ENCODE measurements at regions of chr12 and their contacts with region 1.

Region 1: GRCh38 chr12:12442548-12443071 is 85.7 kb downstream of the BORCS5 start:
- DNase-seq: no peak
- H3K4me3 Mint-ChIP-seq: peak overlapping the region; percentile 21
- H3K27ac Mint-ChIP-seq: peak overlapping the region; percentile 91
- H3K4me1 Mint-ChIP-seq: peaks cover 64% of the 10 kb centered on the region
- H3K27me3 Mint-ChIP-seq: no peaks in the 10 kb centered on the region

Region 2: DNA sequence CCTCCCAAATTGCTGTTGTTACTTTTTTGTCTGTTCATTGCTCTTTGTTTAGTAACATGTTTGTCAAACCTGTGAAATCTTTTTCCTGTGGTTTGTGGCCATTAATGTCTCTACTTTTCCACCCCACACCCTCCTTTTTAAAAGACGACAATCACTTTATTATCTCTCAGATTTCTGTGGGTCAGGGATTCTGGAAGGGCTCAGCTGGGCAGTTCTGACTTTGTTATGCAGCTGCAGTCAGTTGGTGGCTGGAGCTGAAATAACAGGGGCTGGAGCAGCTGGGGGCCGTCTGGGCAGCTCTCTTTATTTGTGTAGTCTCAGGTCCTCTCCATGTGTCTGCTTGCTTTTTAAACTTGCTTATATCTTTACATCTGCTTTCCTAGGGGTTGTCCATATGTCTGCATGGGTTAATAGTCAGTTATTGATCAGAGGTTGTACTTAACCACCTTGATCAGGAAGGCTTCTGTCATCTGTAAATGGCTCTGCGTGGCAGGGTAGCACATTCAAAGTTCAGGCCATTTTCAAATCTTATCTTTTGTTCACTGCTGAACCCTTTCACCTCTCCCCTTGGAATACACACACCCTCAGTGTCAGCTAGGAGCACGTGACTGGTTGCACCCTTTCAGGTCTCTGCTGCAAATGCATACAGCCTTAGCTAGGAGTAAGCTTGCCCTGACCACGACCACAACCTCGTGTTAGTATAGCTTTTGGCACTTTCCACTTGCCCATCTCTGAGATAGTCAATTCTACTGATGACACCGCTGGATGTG is 57.9 kb before region 1 on chr12:
- intact Hi-C with region 1: loop called (anchors 5 kb)
- DNase-seq: peak; percentile 85
- H3K4me3 Mint-ChIP-seq: peak overlapping the region; percentile 65
- H3K27ac Mint-ChIP-seq: peak overlapping the region; percentile 91
- H3K4me1 Mint-ChIP-seq: peaks cover 31% of the 10 kb centered on the region
- H3K27me3 Mint-ChIP-seq: no peaks in the 10 kb centered on the region

Region 3: GRCh38 chr12:12456637-12457036 is 14.0 kb after region 1 on chr12:
- intact Hi-C with region 1: loop called (anchors 1 kb)
- DNase-seq: no peak
- H3K4me3 Mint-ChIP-seq: peak overlapping the region; percentile 45
- H3K27ac Mint-ChIP-seq: peak overlapping the region; percentile 85
- H3K4me1 Mint-ChIP-seq: peaks cover 41% of the 10 kb centered on the region
- H3K27me3 Mint-ChIP-seq: no peaks in the 10 kb centered on the region

Region 4: DNA sequence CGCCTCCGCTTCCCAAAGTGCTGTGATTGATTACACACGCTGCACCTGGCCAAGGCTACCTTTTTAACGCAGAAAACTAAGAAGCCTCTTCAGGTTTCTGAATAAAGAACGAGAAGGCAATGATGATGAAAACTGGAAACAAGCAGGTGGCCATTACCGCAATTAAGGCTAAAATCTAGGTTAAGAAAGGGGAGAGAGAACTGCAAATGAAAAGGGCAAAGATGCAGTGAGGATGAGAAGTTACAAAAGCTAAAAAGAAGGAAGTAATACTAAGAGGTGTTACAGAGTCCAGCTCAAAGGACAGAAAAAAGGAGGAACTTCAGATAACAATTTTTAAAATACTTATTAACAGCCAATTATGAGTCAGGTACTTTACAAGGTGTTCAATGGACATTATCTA is 40.3 kb after region 1 on chr12:
- intact Hi-C with region 1: loop called (anchors 1 kb)
- DNase-seq: no peak
- H3K4me3 Mint-ChIP-seq: peak overlapping the region; percentile 83
- H3K27ac Mint-ChIP-seq: peak overlapping the region; percentile 96
- H3K4me1 Mint-ChIP-seq: peaks cover 59% of the 10 kb centered on the region
- H3K27me3 Mint-ChIP-seq: no peaks in the 10 kb centered on the region

Region 5: DNA sequence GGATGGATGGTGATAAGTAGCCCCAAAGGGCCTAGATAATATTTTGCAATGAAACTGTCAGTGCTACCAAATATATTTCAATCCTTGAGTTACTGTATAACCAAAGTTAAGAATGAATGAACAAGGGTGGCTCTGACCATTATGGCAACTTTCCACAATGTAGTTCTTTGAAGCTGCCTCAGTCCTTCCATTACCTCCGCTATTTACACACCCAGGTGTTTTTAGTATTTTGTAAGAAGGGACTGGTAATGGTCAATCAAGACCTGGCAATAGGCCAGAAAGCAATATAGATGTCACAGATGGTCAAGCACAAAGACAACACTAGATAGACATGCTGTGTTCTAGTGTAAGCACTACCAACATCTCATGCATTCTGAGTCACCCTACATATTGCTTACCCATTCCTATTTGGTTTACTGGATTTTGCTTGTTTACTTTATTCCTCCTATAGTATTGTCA is 103.7 kb after region 1 on chr12:
- intact Hi-C with region 1: no loop called
- DNase-seq: no peak
- H3K4me3 Mint-ChIP-seq: no peak overlapping the region
- H3K27ac Mint-ChIP-seq: no peak overlapping the region
- H3K4me1 Mint-ChIP-seq: peaks cover 21% of the 10 kb centered on the region
- H3K27me3 Mint-ChIP-seq: no peaks in the 10 kb centered on the region

Region 6: DNA sequence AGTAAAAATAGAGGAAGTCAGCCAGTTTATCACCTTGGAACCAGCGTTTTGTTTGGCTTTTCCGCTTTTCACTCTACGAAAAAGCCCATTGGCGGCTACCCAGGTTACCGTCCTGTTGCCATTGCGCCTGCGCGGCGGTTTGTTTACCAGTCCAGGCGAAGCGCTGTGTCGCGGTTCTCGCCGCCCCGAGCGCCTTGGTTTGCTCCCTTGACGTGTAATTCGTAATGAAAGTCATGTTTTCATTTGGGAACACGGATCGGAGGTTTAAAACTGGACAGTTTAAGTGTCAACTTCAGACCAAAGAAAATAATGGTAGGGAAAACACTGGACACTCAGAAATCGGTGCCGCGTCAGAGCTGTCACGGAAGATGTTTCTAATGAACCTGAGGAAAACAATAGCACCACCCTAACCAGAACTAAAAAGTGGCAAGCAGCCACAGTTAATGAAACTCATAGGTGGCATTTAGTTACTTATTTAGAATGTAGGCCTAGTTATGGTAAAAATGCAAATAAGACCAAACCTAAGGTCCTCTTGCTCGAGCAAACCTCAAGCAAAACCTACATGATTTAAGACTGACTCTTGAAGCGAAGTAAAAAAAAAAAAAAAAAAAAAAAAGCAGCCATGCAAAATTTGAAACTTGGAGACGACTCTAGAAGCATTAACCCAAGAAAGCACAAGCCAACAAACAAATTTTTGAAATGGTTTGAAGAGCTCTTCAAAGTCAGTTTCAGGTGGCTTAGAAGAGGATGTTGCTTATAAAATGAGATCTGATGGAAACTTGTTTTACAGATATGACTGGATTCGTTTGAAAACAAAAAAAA is 254.2 kb after region 1 on chr12:
- intact Hi-C with region 1: loop called (anchors 1 kb)
- DNase-seq: peak; percentile 98
- H3K4me3 Mint-ChIP-seq: peak overlapping the region; percentile 94
- H3K27ac Mint-ChIP-seq: peak overlapping the region; percentile 99
- H3K4me1 Mint-ChIP-seq: peaks cover 60% of the 10 kb centered on the region
- H3K27me3 Mint-ChIP-seq: no peaks in the 10 kb centered on the region